Endothelial cell of umbilical vein (primary cell): ENCODE measurements at regions of chr7 and their contacts with region 1.

Region 1: GRCh38 chr7:120805636-120806388 is 52.1 kb downstream of the TSPAN12 start:
- DNase-seq: peak; percentile 80
- H3K4me3 ChIP-seq: no peak overlapping the region
- H3K27ac ChIP-seq: no peak overlapping the region
- H3K4me1 ChIP-seq: peaks cover 12% of the 10 kb centered on the region
- H3K27me3 ChIP-seq: no peaks in the 10 kb centered on the region
- CTCF ChIP-seq: peak; percentile 67 to 77
- POLR2A ChIP-seq: no peak

Region 2: DNA sequence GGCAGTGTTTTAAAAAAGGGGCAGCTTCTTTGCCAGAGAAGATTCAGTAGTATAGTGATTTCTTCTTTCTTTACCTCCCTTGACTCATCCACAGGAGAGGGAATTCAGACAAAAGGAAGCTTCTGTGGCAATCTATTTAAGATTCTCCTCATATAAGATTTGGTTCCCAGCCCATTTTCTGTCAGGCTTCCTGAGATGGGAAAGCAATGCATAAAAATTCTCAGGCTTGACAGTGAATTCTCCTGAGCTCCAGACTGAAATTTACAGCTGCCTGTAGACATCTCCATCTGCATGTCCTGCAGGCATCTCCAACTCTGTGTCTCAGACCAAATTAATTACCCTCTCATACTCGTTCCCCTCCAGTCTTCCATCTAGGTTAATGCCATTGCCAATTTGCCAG is 20.7 kb before region 1 on chr7:
- CTCF ChIA-PET with region 1: interaction called, 11 read pairs
- POLR2A ChIA-PET with region 1: no interaction called
- dilution Hi-C with region 1: no loop called
- intact Hi-C with region 1: no loop called
- DNase-seq: no peak
- H3K4me3 ChIP-seq: no peak overlapping the region
- H3K27ac ChIP-seq: no peak overlapping the region
- H3K4me1 ChIP-seq: no peaks in the 10 kb centered on the region
- H3K27me3 ChIP-seq: no peaks in the 10 kb centered on the region
- CTCF ChIP-seq: no peak
- POLR2A ChIP-seq: no peak

Region 3: DNA sequence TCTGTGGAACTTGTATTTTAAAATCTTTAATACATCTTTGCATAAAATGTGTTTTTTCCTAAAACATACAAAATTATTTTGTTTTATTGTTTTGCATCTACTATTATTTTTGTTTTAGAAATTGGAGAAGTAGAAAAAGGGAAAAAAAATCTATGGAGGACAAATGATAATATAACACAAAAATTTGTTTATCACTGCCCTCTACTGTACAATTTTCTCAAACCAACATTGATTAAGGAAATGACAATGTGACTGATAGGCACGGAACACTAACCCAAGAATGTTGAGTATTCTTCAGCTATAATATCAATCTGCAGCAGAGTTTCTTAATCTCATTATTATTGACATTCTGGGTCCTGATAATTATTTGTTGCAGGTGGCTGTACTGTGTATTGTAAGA is 135.3 kb after region 1 on chr7:
- CTCF ChIA-PET with region 1: interaction called, 12 read pairs
- POLR2A ChIA-PET with region 1: no interaction called
- dilution Hi-C with region 1: no loop called
- intact Hi-C with region 1: loop called (anchors 1 kb)
- DNase-seq: peak; percentile 75
- H3K4me3 ChIP-seq: no peak overlapping the region
- H3K27ac ChIP-seq: peak overlapping the region; percentile 87
- H3K4me1 ChIP-seq: peaks cover 46% of the 10 kb centered on the region
- H3K27me3 ChIP-seq: no peaks in the 10 kb centered on the region
- CTCF ChIP-seq: peak in 1 of 2 donors; percentile 26
- POLR2A ChIP-seq: no peak

Region 4: DNA sequence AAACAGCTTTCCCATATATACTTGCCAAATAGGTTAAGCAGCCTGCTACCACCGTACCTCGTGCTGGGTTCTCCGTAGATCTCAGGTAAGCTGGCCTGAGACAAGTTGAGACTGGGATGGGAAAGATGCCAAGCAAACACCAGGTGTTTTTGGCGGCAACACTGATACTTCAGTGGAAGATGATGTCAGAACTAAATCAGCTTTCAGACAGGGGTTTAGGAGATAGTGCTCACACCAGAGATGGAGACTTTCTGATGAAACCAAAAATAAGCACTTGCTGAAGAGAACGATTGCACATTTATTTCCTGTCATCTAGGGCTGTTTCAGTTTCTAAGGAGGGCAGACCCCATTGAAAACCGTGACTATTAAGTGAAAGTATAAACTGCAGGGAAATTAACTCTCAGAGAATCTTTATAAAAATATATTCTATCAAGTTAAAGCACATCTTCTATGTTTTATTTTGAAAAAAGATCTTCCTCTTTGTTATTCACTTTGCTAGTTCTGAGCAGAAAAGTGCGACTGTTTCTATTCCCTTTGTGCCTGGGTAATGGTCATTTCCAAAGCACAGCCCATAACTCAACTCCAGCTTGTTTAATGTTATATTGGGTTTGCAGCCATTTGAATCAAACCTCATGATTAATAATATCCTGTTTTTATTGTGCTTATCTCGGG is 332.6 kb after region 1 on chr7:
- CTCF ChIA-PET with region 1: no interaction called
- POLR2A ChIA-PET with region 1: no interaction called
- dilution Hi-C with region 1: no loop called
- intact Hi-C with region 1: no loop called
- DNase-seq: no peak
- H3K4me3 ChIP-seq: no peak overlapping the region
- H3K27ac ChIP-seq: no peak overlapping the region
- H3K4me1 ChIP-seq: no peaks in the 10 kb centered on the region
- H3K27me3 ChIP-seq: peaks cover 0 to 9% of the 10 kb centered on the region in 2 experiments
- CTCF ChIP-seq: no peak
- POLR2A ChIP-seq: no peak